Prostate gland (tissue), 2 donors: ENCODE measurements at regions of chr16 and their contacts with region 1.

Region 1: GRCh38 chr16:67150833-67151396 is at the start of gene B3GNT9:
- DNase-seq: peak; percentile 72
- H3K4me3 ChIP-seq: peak within 1 kb of the TSS; percentile 64 to 68
- H3K27ac ChIP-seq: peak within 1 kb of the TSS; percentile 83 to 91
- H3K4me1 ChIP-seq: peaks cover 5% of the 10 kb centered on the region
- H3K27me3 ChIP-seq: no peaks in the 10 kb centered on the region
- CTCF ChIP-seq: no peak
- POLR2A ChIP-seq: no peak
- total RNA-seq, gene B3GNT9: 32.1 to 37.3 TPM

Region 2: GRCh38 chr16:66954097-66954659 is 196.7 kb before region 1 on chr16:
- intact Hi-C with region 1: loop called (anchors 5 kb)
- DNase-seq: peak; percentile 67
- H3K4me3 ChIP-seq: no peak overlapping the region
- H3K27ac ChIP-seq: no peak overlapping the region
- H3K4me1 ChIP-seq: no peaks in the 10 kb centered on the region
- H3K27me3 ChIP-seq: no peaks in the 10 kb centered on the region
- CTCF ChIP-seq: peak; percentile 48 to 85 (median 75)
- POLR2A ChIP-seq: no peak

Region 3: GRCh38 chr16:67109407-67110135 is 41.3 kb before region 1 on chr16 and contains the start of gene PHAF1:
- intact Hi-C with region 1: loop called (anchors 5 kb)
- DNase-seq: peak; percentile 95
- H3K4me3 ChIP-seq: peak within 1 kb of the TSS; percentile 85 to 99
- H3K27ac ChIP-seq: peak within 1 kb of the TSS; percentile 73 to 89
- H3K4me1 ChIP-seq: peaks cover 5% of the 10 kb centered on the region
- H3K27me3 ChIP-seq: no peaks in the 10 kb centered on the region
- CTCF ChIP-seq: peak in 2 of 4 experiments; percentile 26 to 28
- POLR2A ChIP-seq: peak; percentile 93
- total RNA-seq, gene PHAF1: 30.1 to 31.9 TPM

Region 4: GRCh38 chr16:67339453-67339852 is 188.5 kb after region 1 on chr16:
- intact Hi-C with region 1: no loop called
- DNase-seq: no peak
- H3K4me3 ChIP-seq: no peak overlapping the region
- H3K27ac ChIP-seq: no peak overlapping the region
- H3K4me1 ChIP-seq: no peaks in the 10 kb centered on the region
- H3K27me3 ChIP-seq: no peaks in the 10 kb centered on the region
- CTCF ChIP-seq: no peak
- POLR2A ChIP-seq: no peak